A549 (cell line): ENCODE measurements at regions of chr20 and their contacts with region 1.

Region 1: GRCh38 chr20:49245921-49246740 is 26.9 kb downstream of the DDX27 start:
- DNase-seq: peak; percentile 53 to 73
- ATAC-seq: peak; percentile 80 to 88
- H3K4me3 ChIP-seq: no peak overlapping the region
- H3K27ac ChIP-seq: no peak overlapping the region
- H3K4me1 ChIP-seq: no peaks in the 10 kb centered on the region
- CTCF ChIP-seq: peak; percentile 59
- EP300 ChIP-seq: no peak
- POLR2A ChIP-seq: no peak
- RAD21 ChIP-seq: peak; percentile 27 to 47; a peak in 3 of 5 replicates

Region 2: DNA sequence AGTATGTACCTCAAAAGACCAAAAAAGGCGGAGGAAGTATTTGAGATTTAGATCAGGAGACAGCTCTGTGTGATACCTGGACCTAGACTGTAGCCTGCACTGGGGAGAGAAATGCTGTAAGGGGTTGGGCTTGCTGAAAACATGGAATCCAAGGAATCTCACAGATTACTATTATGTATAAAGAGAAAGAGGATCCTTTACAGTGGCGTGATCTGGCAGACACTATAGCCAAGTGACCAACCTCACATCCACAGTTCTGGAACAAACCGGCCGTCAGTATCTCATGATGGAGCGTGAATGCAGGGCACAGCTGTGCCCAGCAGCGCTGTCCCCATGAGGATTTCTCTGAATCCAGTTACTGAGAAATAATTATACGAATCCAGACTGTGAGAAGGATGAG is 14.7 kb before region 1 on chr20:
- CTCF ChIA-PET with region 1: interaction called, 24 read pairs
- POLR2A ChIA-PET with region 1: no interaction called
- DNase-seq: no peak
- ATAC-seq: no peak
- H3K4me3 ChIP-seq: no peak overlapping the region
- H3K27ac ChIP-seq: no peak overlapping the region
- H3K4me1 ChIP-seq: no peaks in the 10 kb centered on the region
- CTCF ChIP-seq: no peak
- EP300 ChIP-seq: no peak
- POLR2A ChIP-seq: no peak
- RAD21 ChIP-seq: no peak

Region 3: DNA sequence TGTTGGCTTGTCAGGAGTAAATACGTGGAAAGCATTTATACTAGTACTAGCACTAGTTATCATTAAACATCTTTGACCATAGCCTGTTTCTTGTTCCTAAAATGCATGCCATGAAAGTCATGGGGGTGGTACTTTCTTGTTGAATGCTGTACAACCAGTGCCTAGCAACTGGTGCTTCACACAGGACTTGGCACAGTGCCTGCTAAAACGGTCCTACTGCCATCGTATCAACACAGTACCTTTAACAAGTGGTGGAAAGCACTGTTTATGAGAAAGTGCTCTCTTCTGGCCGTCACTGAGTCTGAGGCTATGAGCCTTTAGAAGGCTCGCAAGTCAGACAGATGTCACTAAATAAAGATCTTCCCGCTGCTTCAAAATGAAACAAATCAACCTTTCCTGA is 10.1 kb after region 1 on chr20:
- CTCF ChIA-PET with region 1: interaction called, 12 read pairs
- POLR2A ChIA-PET with region 1: no interaction called
- DNase-seq: no peak
- ATAC-seq: no peak
- H3K4me3 ChIP-seq: no peak overlapping the region
- H3K27ac ChIP-seq: no peak overlapping the region
- H3K4me1 ChIP-seq: peaks cover 3% of the 10 kb centered on the region; the same call in 1 of the 3 replicates
- CTCF ChIP-seq: no peak
- EP300 ChIP-seq: no peak
- POLR2A ChIP-seq: no peak
- RAD21 ChIP-seq: no peak

Region 4: GRCh38 chr20:49323622-49324238 is 77.6 kb after region 1 on chr20:
- CTCF ChIA-PET with region 1: interaction called, 22 read pairs
- POLR2A ChIA-PET with region 1: interaction called, 3 read pairs
- DNase-seq: peak in 1 of 2 experiments; percentile 47
- ATAC-seq: peak; percentile 58 to 68
- H3K4me3 ChIP-seq: no peak overlapping the region
- H3K27ac ChIP-seq: no peak overlapping the region
- H3K4me1 ChIP-seq: peaks cover 4% of the 10 kb centered on the region; the same call in 1 of the 3 replicates
- CTCF ChIP-seq: no peak
- EP300 ChIP-seq: no peak
- POLR2A ChIP-seq: no peak
- RAD21 ChIP-seq: peak; percentile 33 to 44; a peak in 2 of 5 replicates

Region 5: GRCh38 chr20:49397525-49397924 is 151.4 kb after region 1 on chr20:
- CTCF ChIA-PET with region 1: no interaction called
- POLR2A ChIA-PET with region 1: no interaction called
- DNase-seq: peak; percentile 25 to 26
- ATAC-seq: peak; percentile 47 to 60; a peak in 5 of 6 replicates
- H3K4me3 ChIP-seq: no peak overlapping the region
- H3K27ac ChIP-seq: peak overlapping the region in 1 of 2 experiments; percentile 42; a peak in 2 of 6 replicates
- H3K4me1 ChIP-seq: peaks cover 7% of the 10 kb centered on the region; the same call in 1 of the 3 replicates
- CTCF ChIP-seq: no peak
- EP300 ChIP-seq: no peak
- POLR2A ChIP-seq: no peak
- RAD21 ChIP-seq: no peak

Region 6: DNA sequence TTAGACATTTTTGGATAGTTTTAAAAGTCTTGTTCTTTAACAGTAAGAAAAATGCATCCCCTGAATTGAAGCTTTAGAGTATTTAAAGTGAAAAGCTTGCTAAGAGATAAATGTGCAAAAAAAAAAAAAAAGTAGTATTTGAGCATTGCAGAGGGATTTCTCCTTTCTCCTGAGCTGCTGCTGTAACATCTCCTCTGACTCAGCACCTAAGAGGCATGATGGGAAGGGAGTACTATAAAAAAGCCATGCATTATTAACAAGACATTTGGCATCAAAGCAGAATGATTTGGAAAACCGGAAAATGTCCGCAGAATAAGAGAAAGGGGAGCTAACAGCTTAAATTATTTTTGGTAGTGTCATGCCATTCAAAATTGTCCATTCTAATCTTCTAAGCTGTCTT is 439.7 kb after region 1 on chr20:
- CTCF ChIA-PET with region 1: no interaction called
- POLR2A ChIA-PET with region 1: no interaction called
- DNase-seq: no peak
- ATAC-seq: peak; percentile 48 to 70; a peak in 4 of 6 replicates
- H3K4me3 ChIP-seq: no peak overlapping the region
- H3K27ac ChIP-seq: peak overlapping the region; percentile 98
- H3K4me1 ChIP-seq: peaks cover 100% of the 10 kb centered on the region
- CTCF ChIP-seq: no peak
- EP300 ChIP-seq: no peak
- POLR2A ChIP-seq: no peak
- RAD21 ChIP-seq: no peak